ENCODE measurements at regions of chr16 and their contacts with region 1.

Region 1: DNA sequence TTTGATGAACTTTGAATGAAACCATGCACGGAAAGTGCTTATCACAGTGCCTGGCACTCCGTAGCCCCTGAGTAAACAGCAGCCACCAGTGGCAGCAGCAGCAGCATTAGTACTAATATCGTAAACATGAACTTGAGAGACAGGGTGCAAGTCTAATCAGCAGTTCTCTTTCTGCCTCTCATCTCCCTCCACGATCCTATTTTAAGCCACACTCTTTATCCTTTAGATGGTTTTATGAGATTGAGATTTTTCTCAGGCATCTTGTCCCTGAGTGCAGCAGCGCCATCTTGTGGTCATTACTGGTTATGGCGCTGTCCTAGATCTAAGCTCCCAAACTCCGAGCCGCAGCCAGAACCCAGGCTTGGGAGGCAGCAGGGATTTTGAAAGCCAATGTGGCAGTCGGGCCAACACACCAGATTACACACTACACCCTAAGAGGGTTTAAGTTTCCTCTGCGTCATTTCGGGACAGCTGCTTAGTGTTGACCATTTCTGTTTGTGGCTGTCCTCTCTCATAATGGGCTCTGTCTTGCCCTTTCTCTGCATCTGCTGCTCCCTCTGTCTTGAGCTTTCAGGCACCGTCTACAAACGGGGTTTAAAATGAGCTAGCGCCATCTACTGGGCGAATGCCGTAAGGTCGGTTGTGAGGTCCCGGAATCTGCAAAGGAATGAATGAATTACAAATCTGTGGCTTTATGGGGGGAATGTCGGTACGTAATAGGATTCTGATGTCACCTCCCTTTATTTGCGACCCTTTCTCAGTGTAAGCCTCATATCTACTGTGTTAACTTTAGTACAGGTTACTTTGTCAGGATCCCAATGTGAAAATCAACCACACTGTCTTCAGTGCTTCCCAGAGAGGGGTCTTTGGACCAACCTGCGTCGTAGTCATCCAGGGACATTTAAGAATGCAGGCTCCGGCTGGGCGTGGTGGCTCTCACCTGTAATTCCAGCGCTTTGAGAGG is 64.5 kb downstream of the CYLD start:
- DNase-seq: peak; percentile 83
- H3K4me3 Mint-ChIP-seq: peak overlapping the region; percentile 37
- H3K27ac Mint-ChIP-seq: no peak overlapping the region
- H3K4me1 Mint-ChIP-seq: peaks cover 5% of the 10 kb centered on the region
- H3K27me3 Mint-ChIP-seq: peaks cover 37% of the 10 kb centered on the region
- CTCF ChIP-seq: peak; percentile 83

Region 2: GRCh38 chr16:50548125-50548908 is 258.1 kb before region 1 on chr16 and contains the start of gene NKD1:
- CTCF ChIA-PET with region 1: interaction called, 3 read pairs
- intact Hi-C with region 1: loop called (anchors 5 kb)
- DNase-seq: peak; percentile 63
- H3K4me3 Mint-ChIP-seq: peak within 1 kb of the TSS; percentile 76
- H3K27ac Mint-ChIP-seq: no peak within 1 kb of the TSS
- H3K4me1 Mint-ChIP-seq: no peaks in the 10 kb centered on the region
- H3K27me3 Mint-ChIP-seq: peaks cover 91% of the 10 kb centered on the region
- CTCF ChIP-seq: no peak
- total RNA-seq, gene NKD1: 0.20 and 0.31 TPM in 2 replicates

Region 3: GRCh38 chr16:50665128-50665878 is 141.1 kb before region 1 on chr16:
- CTCF ChIA-PET with region 1: interaction called, 70 read pairs
- intact Hi-C with region 1: no loop called
- DNase-seq: peak; percentile 92
- H3K4me3 Mint-ChIP-seq: peak overlapping the region; percentile 49
- H3K27ac Mint-ChIP-seq: peak overlapping the region; percentile 21
- H3K4me1 Mint-ChIP-seq: peaks cover 31% of the 10 kb centered on the region
- H3K27me3 Mint-ChIP-seq: no peaks in the 10 kb centered on the region
- CTCF ChIP-seq: peak; percentile 94

Region 4: GRCh38 chr16:50719518-50720337 is 86.7 kb before region 1 on chr16:
- CTCF ChIA-PET with region 1: interaction called, 10 read pairs
- intact Hi-C with region 1: no loop called
- DNase-seq: peak; percentile 74
- H3K4me3 Mint-ChIP-seq: peak overlapping the region; percentile 39
- H3K27ac Mint-ChIP-seq: peak overlapping the region; percentile 57
- H3K4me1 Mint-ChIP-seq: peaks cover 48% of the 10 kb centered on the region
- H3K27me3 Mint-ChIP-seq: no peaks in the 10 kb centered on the region
- CTCF ChIP-seq: no peak

Measured in Calu3 (cell line).